Breast epithelium (tissue), 4 donors: ENCODE measurements at regions of chr5 and their contacts with region 1.

Region 1: GRCh38 chr5:91164424-91164823 is 218.7 kb downstream of the ARRDC3 start:
- DNase-seq: no peak
- H3K4me3 ChIP-seq: no peak overlapping the region
- H3K27ac ChIP-seq: peak overlapping the region; percentile 84 to 88
- H3K4me1 ChIP-seq: peaks cover 9 to 19% of the 10 kb centered on the region in 2 donors
- H3K27me3 ChIP-seq: no peaks in the 10 kb centered on the region
- CTCF ChIP-seq: no peak
- POLR2A ChIP-seq: no peak

Region 2: DNA sequence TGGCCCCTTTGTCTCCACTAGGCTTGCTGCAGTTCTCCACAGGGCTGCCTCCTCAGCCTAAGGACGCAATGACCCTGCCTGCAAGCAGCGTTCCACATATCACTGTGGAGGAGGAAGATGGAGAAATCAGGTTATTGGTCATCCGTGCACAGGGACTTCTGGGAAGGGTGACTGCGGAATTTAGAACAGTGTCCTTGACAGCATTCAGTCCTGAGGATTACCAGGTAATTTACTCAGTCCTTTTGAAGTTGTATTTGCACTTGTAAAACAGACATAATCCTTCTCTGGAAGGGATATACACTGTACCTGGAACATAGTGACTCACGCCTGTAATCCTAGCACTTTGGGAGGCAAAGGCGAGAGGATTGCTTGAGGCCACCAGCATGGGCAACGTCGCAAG is 489.2 kb before region 1 on chr5:
- intact Hi-C with region 1: no loop called
- DNase-seq: no peak
- H3K4me3 ChIP-seq: no peak overlapping the region
- H3K27ac ChIP-seq: no peak overlapping the region
- H3K4me1 ChIP-seq: no peaks in the 10 kb centered on the region
- H3K27me3 ChIP-seq: no peaks in the 10 kb centered on the region
- CTCF ChIP-seq: no peak
- POLR2A ChIP-seq: no peak

Region 3: DNA sequence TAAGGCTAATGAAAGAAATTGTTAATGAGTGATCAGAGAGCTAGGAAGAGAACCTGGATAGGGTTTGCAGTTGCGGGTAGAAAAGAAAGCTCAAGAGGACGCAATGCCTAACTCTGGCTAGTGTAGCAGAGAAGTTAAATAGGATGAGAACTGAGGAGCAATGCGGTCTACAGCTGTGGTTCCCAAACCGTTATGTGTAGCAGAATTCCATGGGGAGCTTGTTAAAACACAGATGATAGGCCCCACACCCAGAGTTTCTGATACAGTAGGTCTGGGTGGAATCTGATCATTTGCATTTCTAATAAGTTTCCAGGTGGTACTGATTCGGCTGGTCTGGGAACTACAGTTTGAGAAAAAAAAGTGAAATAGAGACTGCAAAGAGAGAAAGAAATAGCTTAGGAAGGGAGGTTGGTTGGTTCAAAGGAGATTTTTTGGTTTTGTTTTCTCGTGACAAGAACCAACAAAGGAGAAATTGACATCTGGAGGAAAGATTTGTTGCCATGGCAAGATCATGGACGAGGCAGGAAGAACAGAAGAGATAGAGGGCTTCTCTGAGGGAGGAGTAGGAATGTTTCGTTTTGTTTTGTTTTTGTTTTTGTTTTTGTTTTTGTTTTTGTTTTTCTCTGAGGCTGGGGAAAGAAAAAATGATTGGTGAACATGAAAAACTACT is 57.4 kb before region 1 on chr5:
- intact Hi-C with region 1: loop called (anchors 2 kb)
- DNase-seq: no peak
- H3K4me3 ChIP-seq: no peak overlapping the region
- H3K27ac ChIP-seq: no peak overlapping the region
- H3K4me1 ChIP-seq: no peaks in the 10 kb centered on the region
- H3K27me3 ChIP-seq: no peaks in the 10 kb centered on the region
- CTCF ChIP-seq: no peak
- POLR2A ChIP-seq: no peak

Region 4: GRCh38 chr5:91690921-91691320 is 526.5 kb after region 1 on chr5:
- intact Hi-C with region 1: no loop called
- DNase-seq: no peak
- H3K4me3 ChIP-seq: no peak overlapping the region
- H3K27ac ChIP-seq: no peak overlapping the region
- H3K4me1 ChIP-seq: no peaks in the 10 kb centered on the region
- H3K27me3 ChIP-seq: no peaks in the 10 kb centered on the region
- CTCF ChIP-seq: no peak
- POLR2A ChIP-seq: no peak